ENCODE measurements at regions of chr2 and their contacts with region 1.

Region 1: DNA sequence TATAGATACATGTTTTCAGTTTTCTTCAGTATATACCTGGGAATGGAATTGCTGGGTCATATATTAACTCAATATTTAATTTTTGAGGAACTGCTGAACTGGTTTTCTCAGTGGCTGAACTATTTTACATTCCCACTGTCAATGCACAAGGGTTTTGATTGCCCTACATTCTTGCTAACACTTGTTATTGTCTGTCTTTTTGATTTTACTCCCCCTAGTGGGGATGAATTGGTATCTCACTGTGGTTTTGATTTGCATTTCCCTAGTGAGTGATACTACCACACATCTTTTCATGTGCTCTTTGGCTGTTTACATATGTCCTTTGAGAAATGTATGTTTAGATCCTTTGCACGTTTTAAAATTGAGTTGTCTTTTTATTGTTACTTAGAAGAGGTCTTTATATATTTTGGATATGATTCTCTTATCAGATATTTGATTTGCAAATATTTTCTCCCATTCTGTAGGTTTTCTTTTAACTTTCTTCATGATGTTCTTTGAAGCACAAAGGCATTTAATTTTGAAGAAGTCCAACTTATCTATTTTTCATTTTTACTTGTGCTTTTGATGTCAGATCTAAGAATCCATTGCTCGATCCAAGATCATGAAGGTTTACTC is 36.2 kb downstream of the ASB1 start:
- DNase-seq: no peak
- ATAC-seq: no peak
- H3K4me3 ChIP-seq: no peak overlapping the region
- H3K27ac ChIP-seq: no peak overlapping the region
- H3K4me1 ChIP-seq: no peaks in the 10 kb centered on the region
- H3K27me3 ChIP-seq: no peaks in the 10 kb centered on the region
- CTCF ChIP-seq: peak in 6 of 7 experiments; percentile 42 to 69 (median 62)
- POLR2A ChIP-seq: no peak

Region 2: GRCh38 chr2:238369591-238370040 is 93.3 kb before region 1 on chr2:
- intact Hi-C with region 1: loop called (anchors 10 kb)
- DNase-seq: no peak
- ATAC-seq: no peak
- H3K4me3 ChIP-seq: no peak overlapping the region
- H3K27ac ChIP-seq: no peak overlapping the region
- H3K4me1 ChIP-seq: peaks cover 4% of the 10 kb centered on the region
- H3K27me3 ChIP-seq: no peaks in the 10 kb centered on the region
- CTCF ChIP-seq: no peak
- POLR2A ChIP-seq: no peak